A549 (cell line): ENCODE measurements at regions of chr2 and their contacts with region 1.

Region 1: DNA sequence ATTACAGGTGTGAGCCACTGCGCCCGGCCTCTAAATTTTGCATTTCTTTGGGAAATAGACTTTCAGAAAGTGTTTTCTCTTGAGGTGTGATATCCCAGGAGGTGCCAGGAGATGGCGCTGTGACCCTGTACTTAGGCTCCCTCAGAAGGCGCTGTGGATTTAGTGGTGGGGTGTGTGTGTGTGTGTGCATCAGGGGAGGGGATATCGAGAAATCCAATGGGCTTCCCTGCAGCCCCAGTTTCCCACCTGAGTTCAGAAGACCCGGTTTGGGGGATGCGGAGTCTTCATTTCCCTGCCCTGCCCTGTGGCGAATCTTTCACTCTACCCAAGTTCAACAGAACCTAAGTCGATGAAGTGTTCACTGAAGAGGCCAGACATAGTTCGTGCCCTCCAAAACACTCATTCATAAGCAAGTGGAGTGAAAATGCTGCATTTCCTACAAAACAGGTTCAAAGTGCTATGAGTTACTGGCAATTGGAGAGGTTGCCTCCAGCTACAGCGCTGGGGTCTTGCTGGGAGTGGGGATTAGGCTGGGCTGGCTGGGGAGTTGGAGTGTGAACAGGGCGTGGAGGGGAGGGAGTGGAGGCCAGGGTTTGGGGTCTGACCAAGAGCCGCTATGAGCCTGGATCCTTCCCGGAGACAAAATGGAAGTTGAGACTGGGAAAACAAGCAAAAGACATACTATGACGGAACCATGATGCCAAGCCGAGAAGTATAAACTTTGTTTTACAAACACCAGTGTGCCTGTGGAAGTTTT is 6.5 kb upstream of the WNT6 start:
- DNase-seq: peak in 1 of 2 experiments; percentile 75
- ATAC-seq: peak; percentile 36 to 73; a peak in 4 of 6 replicates
- H3K4me3 ChIP-seq: no peak overlapping the region
- H3K27ac ChIP-seq: 0 out of 6 replicates have a peak overlapping the region, but pooled peaks of 1 of the 2 experiments have one; percentile 12
- H3K4me1 ChIP-seq: peaks cover 25% of the 10 kb centered on the region
- CTCF ChIP-seq: peak; percentile 83
- EP300 ChIP-seq: no peak
- POLR2A ChIP-seq: no peak
- RAD21 ChIP-seq: peak; percentile 82 to 88

Region 2: GRCh38 chr2:218618102-218618860 is 234.8 kb before region 1 on chr2:
- CTCF ChIA-PET with region 1: no interaction called
- POLR2A ChIA-PET with region 1: no interaction called
- DNase-seq: no peak
- ATAC-seq: peak in 1 of 2 experiments; percentile 67; a peak in 3 of 6 replicates
- H3K4me3 ChIP-seq: no peak overlapping the region
- H3K27ac ChIP-seq: no peak overlapping the region
- H3K4me1 ChIP-seq: no peaks in the 10 kb centered on the region
- CTCF ChIP-seq: no peak
- EP300 ChIP-seq: no peak
- POLR2A ChIP-seq: no peak
- RAD21 ChIP-seq: peak in 1 of 2 experiments; percentile 40; a peak in 2 of 5 replicates

Region 3: DNA sequence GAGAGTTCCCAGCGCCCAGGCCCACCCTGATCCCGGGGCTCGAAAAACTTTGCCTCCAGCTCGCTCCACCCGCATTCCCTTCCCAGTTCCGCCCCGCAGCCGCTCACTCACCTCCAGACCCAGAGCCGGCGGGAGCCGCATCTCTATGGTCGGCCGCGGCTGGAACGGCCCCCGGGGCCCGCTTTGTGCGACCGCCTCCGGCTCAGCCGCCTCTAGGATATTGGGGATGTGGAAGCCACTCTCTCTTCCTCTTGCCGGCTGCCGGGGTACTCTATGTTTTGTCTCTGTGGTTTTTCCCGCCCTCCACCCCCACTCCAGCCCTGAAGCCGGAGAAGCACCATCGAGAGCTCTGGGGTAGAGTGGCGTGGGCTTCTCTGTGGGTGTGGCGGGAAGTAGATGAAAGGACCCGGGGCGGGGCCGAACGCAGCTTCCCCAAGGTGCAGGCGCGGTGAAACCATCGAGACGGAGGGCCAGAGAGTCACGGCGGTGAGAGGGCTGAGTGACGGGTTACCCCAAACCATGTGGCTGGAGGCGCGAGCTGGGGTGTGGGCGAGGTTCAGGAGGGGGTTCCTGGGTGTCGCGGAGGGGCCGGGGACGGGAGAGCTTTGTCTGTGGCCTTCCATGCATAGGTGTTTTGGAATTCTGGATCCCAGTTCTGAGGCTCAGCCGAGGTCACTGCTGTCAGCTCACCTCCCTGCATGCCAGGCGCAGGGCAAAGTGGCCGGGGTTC is 193.7 kb before region 1 on chr2 and contains the starts of genes BCS1L and ZNF142:
- CTCF ChIA-PET with region 1: interaction called, 58 read pairs
- POLR2A ChIA-PET with region 1: no interaction called
- DNase-seq: peak; percentile 90 to 92
- ATAC-seq: peak; percentile 94 to 96
- H3K4me3 ChIP-seq: peak within 1 kb of the TSS; percentile 77
- H3K27ac ChIP-seq: peak within 1 kb of the TSS; percentile 93 to 95
- H3K4me1 ChIP-seq: peaks cover 14% of the 10 kb centered on the region; the same call in 2 of the 3 replicates
- CTCF ChIP-seq: no peak
- EP300 ChIP-seq: no peak
- POLR2A ChIP-seq: peak; percentile 91
- RAD21 ChIP-seq: no peak
- polyA plus RNA-seq, gene BCS1L: 47.1 and 47.2 TPM in 2 replicates
- polyA plus RNA-seq, gene ZNF142: 6.3 and 9.5 TPM in 2 replicates

Region 4: GRCh38 chr2:218701806-218702205 is 151.3 kb before region 1 on chr2:
- CTCF ChIA-PET with region 1: interaction called, 54 read pairs
- POLR2A ChIA-PET with region 1: no interaction called
- DNase-seq: no peak
- ATAC-seq: no peak
- H3K4me3 ChIP-seq: no peak overlapping the region
- H3K27ac ChIP-seq: no peak overlapping the region
- H3K4me1 ChIP-seq: no peaks in the 10 kb centered on the region
- CTCF ChIP-seq: no peak
- EP300 ChIP-seq: no peak
- POLR2A ChIP-seq: no peak
- RAD21 ChIP-seq: no peak

Region 5: DNA sequence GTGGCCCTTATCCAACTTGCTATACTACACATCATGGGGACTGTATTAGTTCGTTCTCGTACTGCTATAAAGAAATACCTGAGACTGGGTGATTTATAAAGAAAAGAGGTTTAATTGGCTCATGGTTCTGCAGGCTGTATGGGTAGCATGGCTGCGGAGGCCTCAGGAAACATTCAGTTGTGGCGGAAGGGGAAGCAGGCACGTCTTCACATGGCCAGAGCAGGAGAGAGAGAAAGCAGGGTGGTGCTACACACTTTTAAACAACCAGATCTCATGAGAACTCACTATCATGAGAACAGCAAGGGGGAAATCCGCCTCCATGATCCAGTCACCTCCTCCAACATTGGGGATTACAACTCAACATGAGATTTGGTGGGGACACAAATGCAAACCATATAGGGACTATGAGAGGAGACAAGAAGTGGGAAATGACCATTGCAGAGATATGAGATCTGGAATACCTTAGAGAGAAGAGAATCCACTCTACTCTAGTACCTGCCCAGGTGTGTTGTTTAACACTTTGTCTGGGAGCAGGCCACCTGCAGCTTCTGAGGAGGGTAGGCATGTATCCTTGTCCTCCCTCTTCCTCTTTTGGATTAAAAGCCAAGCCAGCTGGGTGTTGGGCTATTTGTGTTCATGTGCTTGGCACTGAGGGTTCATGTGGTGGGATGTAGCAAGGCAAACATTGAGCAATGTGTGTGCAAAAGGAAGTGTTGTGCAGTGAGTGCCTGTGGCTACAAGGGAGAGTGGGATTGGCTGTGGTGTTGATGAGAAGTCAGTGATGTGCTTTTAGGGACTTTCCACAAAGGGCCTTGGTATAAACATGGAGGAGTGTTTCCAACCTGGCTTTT is 119.7 kb before region 1 on chr2:
- CTCF ChIA-PET with region 1: interaction called, 28 read pairs
- POLR2A ChIA-PET with region 1: no interaction called
- DNase-seq: peak; percentile 10 to 51
- ATAC-seq: peak in 1 of 2 experiments; percentile 50; a peak in 2 of 6 replicates
- H3K4me3 ChIP-seq: no peak overlapping the region
- H3K27ac ChIP-seq: peak overlapping the region in 1 of 2 experiments; percentile 72; a peak in 3 of 6 replicates
- H3K4me1 ChIP-seq: peaks cover 39% of the 10 kb centered on the region
- CTCF ChIP-seq: no peak
- EP300 ChIP-seq: no peak
- POLR2A ChIP-seq: no peak
- RAD21 ChIP-seq: no peak

Region 6: GRCh38 chr2:218832520-218832919 is 20.6 kb before region 1 on chr2:
- CTCF ChIA-PET with region 1: interaction called, 24 read pairs
- POLR2A ChIA-PET with region 1: no interaction called
- DNase-seq: peak in 1 of 2 experiments; percentile 20
- ATAC-seq: peak; percentile 54 to 71; a peak in 4 of 6 replicates
- H3K4me3 ChIP-seq: no peak overlapping the region
- H3K27ac ChIP-seq: peak overlapping the region in 1 of 2 experiments; percentile 50; a peak in 1 of 6 replicates
- H3K4me1 ChIP-seq: peaks cover 8% of the 10 kb centered on the region; the same call in 2 of the 3 replicates
- CTCF ChIP-seq: no peak
- EP300 ChIP-seq: no peak
- POLR2A ChIP-seq: no peak
- RAD21 ChIP-seq: no peak

Region 7: DNA sequence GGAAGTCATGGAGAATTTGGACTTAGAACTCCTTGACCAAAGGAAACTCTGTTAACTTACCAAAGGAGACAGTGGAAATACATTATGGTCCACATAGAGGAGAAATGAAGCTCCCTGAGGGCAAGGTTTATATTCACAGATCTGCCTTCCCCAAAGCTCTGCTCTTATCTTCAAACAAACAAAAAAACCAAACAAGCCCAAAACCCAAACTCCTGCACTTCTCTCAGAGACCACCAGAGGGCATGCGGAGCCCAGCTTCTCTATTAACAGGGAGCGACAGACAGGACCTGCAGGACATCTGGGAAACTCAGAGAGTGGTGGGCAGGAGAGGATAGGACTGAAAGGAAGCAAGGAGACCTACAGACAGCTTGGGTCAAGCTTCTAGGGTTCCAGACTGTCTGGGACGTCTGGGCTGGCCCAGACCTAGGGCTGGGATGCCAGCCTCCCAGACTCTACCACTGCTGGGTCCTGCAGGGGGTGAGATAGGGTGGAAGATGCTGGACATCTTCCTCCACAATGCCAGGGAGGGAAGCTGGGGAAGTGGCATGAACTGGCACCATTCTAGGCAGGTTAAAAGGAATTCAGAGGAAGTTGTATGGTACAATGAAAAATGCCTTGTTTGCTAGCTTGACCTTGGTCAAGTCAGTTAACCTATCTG is 23.6 kb after region 1 on chr2:
- CTCF ChIA-PET with region 1: interaction called, 70 read pairs
- POLR2A ChIA-PET with region 1: no interaction called
- DNase-seq: peak; percentile 62 to 72
- ATAC-seq: peak; percentile 33 to 67; a peak in 5 of 6 replicates
- H3K4me3 ChIP-seq: no peak overlapping the region
- H3K27ac ChIP-seq: no peak overlapping the region
- H3K4me1 ChIP-seq: peaks cover 12% of the 10 kb centered on the region; the same call in 1 of the 3 replicates
- CTCF ChIP-seq: peak; percentile 85
- EP300 ChIP-seq: no peak
- POLR2A ChIP-seq: no peak
- RAD21 ChIP-seq: peak; percentile 75 to 90

Region 8: DNA sequence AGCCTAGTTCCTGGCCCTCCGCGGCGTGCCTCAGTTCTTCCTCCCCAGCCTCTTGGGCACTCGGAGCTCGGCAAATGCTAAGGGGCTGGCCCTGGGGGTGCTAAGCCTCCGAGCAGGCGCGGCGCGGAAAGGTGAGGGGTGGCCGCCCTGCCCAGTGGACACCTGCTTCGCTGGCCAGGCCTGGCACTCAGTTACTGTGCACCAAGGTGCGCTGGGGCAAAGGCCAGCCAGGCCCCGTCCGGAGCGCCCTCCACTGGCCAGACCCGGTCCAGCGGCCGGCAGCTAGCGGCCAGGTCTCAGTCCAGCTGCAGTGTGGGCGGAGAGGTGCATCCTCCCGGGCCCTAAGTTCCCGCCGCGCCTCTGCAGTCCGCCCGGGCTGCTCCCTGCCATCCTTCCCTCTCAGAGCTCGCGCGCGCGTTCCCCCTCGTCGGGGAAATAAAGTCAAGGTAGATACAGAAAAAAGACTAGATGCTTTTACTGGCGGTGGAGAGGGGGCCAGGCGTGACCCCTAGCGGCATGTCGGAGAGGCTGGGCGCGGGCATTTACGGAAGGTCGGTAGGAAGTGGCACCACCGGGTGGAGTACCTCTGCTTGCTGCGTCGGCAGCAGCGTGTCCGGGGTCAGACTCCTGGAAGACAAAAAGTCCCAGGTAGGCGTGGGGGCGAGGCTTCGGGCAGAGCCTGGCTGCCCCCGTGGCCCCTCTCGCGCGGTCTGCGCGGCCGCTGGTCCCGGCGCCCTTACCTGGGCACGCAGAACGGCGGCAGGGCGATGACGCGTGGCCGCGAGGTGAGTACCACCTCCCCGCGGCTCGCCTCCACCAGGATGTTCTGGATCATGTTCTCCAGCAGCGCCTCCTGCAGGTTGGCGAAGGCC is 149.5 kb after region 1 on chr2:
- CTCF ChIA-PET with region 1: interaction called, 11 read pairs
- POLR2A ChIA-PET with region 1: no interaction called
- DNase-seq: peak; percentile 82 to 93
- ATAC-seq: peak; percentile 84 to 93
- H3K4me3 ChIP-seq: peak overlapping the region; percentile 59
- H3K27ac ChIP-seq: peak overlapping the region; percentile 64 to 83
- H3K4me1 ChIP-seq: peaks cover 7% of the 10 kb centered on the region
- CTCF ChIP-seq: peak; percentile 68
- EP300 ChIP-seq: no peak
- POLR2A ChIP-seq: peak; percentile 52
- RAD21 ChIP-seq: 0 out of 5 replicates have a peak, but pooled peaks have one; percentile 17 to 19